Psoas muscle (tissue), 8 donors: ENCODE measurements at regions of chr2 and their contacts with region 1.

Region 1: DNA sequence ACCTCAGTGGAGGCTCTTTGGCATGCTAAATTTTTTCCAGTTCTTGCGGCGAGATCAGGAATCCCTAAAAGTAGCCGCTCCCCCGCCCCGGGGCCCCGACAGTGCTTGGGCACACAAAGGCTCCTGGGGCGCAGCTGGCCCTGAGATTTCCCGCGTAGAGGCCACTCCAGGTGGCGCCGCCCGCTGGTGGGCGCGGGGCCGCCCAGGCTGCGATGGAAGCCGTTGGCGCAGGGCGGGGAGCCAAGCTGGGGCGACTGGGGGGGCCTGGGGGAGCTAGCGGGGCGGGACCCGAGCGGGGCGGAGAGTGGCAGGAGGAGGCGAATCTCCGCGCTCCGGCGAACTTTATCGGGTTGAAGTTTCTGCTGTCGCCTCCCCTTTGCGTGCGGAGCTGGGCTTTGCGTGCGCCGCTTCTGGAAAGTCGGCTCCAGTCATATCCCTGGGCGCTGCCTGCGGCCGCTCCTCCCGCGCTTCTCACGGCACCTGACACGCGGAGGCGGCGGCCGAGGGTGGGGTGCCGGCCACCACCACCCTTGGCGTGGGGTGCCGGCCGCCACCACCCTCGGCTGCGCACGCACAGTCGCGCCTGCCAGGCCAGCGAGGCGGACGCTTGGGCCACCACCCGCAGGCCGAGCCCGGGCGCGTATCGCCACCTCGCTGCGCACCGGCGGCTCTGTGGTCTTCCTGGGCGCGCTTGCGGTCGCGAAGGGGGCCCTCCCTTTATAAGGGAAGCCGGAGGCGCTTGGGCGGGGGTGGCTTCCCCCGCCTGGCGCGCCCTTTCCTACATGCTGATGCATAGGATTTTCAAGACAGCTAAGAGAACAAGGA is 867 bp upstream of the CYP1B1 start:
- DNase-seq: peak; percentile 79 to 87
- ATAC-seq: peak; percentile 54 to 75 (median 72)
- H3K4me3 ChIP-seq: peak overlapping the region; percentile 70
- H3K27ac ChIP-seq: peak overlapping the region; percentile 77
- H3K4me1 ChIP-seq: peaks cover 25% of the 10 kb centered on the region
- H3K27me3 ChIP-seq: peaks cover 0 to 34% (median 25%) of the 10 kb centered on the region in 3 donors
- CTCF ChIP-seq: peak; percentile 16

Region 2: DNA sequence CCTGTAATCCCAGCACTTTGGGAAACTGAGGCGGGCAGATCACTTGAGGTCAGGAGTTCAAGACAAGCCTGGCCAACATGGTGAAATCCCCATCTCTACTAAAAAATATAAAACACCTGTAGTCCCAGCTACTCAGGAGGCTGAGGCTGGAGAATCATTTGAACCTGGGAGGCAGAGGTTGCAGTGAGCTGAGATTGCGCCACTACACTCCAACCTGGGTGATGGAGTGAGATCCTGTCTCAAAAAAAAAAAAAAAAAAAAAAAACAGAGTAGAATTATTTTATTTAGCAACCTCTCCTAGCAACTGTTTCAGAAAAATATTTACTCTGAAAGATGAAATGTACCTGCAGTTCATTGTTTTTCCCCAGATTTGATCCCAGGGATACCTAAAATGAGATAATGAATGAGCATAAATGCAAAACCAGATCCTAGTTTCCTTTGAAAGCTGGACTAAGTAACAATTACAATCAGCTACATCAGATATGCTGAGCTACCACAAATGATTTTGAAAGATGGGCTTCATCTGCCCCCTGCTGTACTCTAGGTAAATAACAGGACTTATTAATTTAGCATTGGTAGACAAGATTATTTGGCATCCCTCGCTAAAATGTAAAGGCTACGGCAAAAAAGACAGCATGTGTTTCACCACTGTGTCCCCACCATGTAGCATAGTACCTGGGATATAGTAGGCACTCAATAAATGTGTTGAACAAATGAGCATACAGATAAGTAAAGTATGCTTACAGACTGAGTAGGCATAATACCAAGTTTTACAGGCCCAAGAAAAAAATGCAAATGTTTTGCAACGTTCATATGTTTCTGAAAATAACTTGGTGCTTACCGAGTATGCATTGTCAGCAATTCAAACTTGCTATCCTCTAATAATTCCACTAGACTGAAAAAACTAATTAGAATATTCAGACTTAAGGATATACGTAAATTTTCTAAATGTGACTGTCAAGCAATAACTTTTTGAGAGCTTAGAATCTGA is 197.8 kb after region 1 on chr2:
- intact Hi-C with region 1: loop called in 1 of 2 experiments (anchors 1 kb)
- DNase-seq: no peak
- ATAC-seq: peak; percentile 71 to 84 (median 81)
- H3K4me3 ChIP-seq: no peak overlapping the region
- H3K27ac ChIP-seq: no peak overlapping the region
- H3K4me1 ChIP-seq: no peaks in the 10 kb centered on the region
- H3K27me3 ChIP-seq: no peaks in the 10 kb centered on the region
- CTCF ChIP-seq: peak; percentile 68

Region 3: DNA sequence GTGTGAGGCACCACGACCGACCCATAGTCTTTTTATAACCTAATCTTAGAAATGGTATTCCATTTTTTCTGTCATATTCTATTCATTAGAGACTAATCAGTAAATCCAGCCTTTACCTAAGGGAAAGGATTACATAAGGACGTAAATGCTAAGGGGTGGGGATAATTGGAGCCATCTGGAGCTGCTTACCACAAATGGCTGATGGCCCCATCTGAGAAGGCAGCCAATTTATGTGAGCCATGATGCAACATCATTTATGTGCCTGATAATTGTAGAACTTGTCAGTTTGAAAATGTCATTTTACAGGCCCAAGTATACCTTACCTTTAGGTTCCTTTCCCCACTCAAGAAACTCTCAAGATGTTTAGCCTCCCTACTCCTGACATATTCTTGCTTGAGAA is 856.8 kb after region 1 on chr2:
- intact Hi-C with region 1: no loop called
- DNase-seq: no peak
- ATAC-seq: no peak
- H3K4me3 ChIP-seq: no peak overlapping the region
- H3K27ac ChIP-seq: no peak overlapping the region
- H3K4me1 ChIP-seq: no peaks in the 10 kb centered on the region
- H3K27me3 ChIP-seq: no peaks in the 10 kb centered on the region
- CTCF ChIP-seq: no peak